Activated CD8-positive, alpha-beta T cell treated with anti-CD3 and anti-CD28 coated beads for 36 hours (primary cell): ENCODE measurements at regions of chr19 and their contacts with region 1.

Region 1: GRCh38 chr19:58519355-58520256 is at the start of gene ZBTB45:
- DNase-seq: peak; percentile 93
- ATAC-seq: peak; percentile 82
- H3K4me3 Mint-ChIP-seq: peak within 1 kb of the TSS; percentile 88
- H3K27ac Mint-ChIP-seq: peak within 1 kb of the TSS; percentile 96
- H3K4me1 Mint-ChIP-seq: peaks cover 37% of the 10 kb centered on the region
- H3K27me3 Mint-ChIP-seq: no peaks in the 10 kb centered on the region
- CTCF ChIP-seq: peak; percentile 78
- total RNA-seq, gene ZBTB45: 7.4 to 7.9 TPM

Region 2: GRCh38 chr19:58261968-58262921 is 257.4 kb before region 1 on chr19:
- CTCF ChIA-PET with region 1: no interaction called
- POLR2A ChIA-PET with region 1: no interaction called
- intact Hi-C with region 1: no loop called
- DNase-seq: no peak
- ATAC-seq: peak; percentile 12
- H3K4me3 Mint-ChIP-seq: no peak overlapping the region
- H3K27ac Mint-ChIP-seq: no peak overlapping the region
- H3K4me1 Mint-ChIP-seq: no peaks in the 10 kb centered on the region
- H3K27me3 Mint-ChIP-seq: no peaks in the 10 kb centered on the region
- CTCF ChIP-seq: no peak

Region 3: DNA sequence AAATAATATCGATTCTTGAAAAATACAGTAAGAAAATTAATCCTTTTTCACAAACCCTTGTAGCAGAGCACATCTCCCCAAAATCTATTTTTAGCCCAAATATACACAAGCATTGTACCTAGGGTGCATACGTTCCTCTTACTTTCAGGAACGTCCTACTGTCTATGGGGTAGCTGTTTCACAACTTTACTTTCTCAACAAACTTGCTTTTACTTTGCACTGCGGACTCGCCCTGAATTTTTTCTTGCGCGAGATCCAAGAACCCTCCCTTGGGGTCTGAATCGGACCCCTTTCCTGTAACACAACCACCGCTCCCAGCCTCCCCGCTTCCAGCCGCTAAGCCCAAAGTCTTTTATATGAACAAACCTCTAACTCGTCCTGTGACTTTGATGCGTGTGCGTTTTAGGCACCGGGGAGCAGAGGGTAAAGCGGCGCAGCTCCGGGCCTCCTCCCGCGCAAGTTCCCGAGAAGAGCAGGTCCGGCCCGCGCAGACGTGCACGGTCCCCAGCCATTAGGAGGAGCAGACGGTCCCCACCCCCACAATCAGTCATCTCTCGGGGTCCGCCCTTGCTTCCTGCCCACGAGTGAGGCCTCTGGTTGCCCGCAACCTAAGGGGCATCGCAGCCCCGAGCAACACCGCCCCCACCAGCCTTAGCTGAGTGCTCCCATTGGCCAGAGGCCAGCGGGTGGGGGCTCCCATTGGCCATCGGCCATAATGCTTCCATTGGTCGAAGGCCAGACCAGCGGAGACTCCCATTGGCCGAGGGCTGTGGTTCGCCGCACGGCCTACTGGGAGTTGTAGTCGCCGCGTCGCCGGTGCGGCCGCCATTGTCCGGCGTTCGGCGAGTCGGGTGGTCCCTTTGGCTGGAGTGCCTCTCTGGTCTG is 241.2 kb before region 1 on chr19 and contains the start of gene ZNF8:
- CTCF ChIA-PET with region 1: no interaction called
- POLR2A ChIA-PET with region 1: no interaction called
- intact Hi-C with region 1: no loop called
- DNase-seq: peak; percentile 99
- ATAC-seq: peak; percentile 98
- H3K4me3 Mint-ChIP-seq: peak within 1 kb of the TSS; percentile 99
- H3K27ac Mint-ChIP-seq: peak within 1 kb of the TSS; percentile 97
- H3K4me1 Mint-ChIP-seq: peaks cover 37% of the 10 kb centered on the region
- H3K27me3 Mint-ChIP-seq: no peaks in the 10 kb centered on the region
- CTCF ChIP-seq: no peak
- total RNA-seq, gene ZNF8: 5.2 to 5.8 TPM

Region 4: DNA sequence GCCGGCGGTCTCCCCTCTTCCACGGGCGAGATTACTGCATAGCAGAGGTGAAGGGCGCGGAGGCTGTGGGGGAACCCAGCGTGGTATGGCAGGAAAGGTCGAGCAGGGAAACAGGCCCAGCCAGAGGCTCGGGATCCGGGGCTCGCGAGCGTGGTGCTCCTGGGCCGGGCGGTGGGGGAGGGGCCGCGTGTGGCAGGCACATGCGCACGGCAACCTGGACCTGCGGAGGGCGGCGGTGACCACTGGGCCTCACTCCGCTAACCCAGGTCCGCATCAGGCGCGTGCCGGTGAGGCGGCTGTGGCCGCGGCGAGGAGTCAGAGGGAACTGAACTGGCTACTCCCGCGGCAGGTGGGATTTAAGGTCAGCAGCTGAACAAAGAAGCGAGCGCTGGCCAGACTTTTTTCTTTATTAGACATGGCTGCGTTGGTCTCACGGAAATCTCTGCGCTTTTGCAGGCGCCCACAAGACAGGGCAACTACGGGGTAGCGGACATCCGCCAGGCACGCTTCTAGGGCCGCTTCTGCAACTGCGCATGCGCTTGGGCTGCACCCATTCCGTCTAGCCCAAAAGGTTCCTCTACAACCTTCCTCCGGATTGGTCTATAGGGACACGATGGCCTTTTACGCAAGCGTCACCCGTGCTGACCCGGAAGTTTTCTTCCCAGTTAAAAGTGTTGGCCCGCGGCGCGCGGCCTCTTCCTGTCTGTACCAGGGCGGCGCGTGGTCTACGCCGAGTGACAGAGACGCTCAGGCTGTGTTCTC is 132.8 kb before region 1 on chr19 and contains the start of gene RPS5:
- CTCF ChIA-PET with region 1: no interaction called
- POLR2A ChIA-PET with region 1: interaction called, 11 read pairs
- intact Hi-C with region 1: no loop called
- DNase-seq: peak; percentile 97
- ATAC-seq: peak; percentile 91
- H3K4me3 Mint-ChIP-seq: peak within 1 kb of the TSS; percentile 97
- H3K27ac Mint-ChIP-seq: peak within 1 kb of the TSS; percentile 98
- H3K4me1 Mint-ChIP-seq: peaks cover 35% of the 10 kb centered on the region
- H3K27me3 Mint-ChIP-seq: no peaks in the 10 kb centered on the region
- CTCF ChIP-seq: no peak
- total RNA-seq, gene RPS5: 1,906 to 1,936 TPM

Region 5: DNA sequence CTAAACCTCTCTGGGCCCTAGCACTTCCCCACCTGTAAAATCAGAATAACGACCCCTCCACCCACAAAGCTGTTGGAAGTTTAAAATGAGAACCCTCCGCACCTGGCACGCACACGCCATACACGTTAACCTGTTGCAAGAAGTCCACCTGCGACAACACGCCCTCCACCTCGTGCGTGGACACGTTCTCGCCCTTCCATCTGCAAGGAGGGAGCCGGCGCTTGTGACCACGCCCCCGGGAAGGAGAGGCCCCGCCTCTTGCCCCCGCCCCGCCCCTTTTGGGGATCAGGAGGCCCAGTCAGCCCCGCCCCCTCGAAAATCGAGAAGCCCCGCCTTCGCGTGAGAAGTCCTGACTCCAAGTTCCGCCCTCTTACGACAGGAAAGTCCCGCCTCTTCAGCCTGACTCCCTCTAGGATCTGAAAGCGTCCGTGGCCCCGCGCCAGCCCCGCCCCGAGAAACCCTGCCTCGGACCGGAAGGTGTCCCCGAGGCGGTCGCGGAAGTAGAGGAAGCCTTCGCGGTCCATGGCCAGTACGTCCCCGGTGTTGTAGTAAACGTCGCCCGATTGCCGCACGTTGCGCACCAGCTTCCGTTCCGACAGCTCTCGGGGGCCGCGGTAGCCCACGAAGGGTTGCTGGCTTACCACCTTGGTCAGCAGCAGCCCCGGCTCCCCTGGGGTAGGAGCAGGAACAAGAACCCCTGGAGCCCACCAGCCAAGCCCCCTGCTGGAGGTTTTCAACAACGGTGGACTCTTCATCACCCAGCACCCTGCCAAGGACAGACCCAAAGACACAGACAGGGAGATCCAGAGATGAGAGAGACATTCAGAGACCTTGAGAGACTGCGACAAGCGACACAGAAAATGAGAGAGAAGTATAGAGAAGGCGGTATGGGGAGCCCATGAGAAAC is 20.3 kb before region 1 on chr19:
- CTCF ChIA-PET with region 1: interaction called, 11 read pairs
- POLR2A ChIA-PET with region 1: interaction called, 27 read pairs
- intact Hi-C with region 1: no loop called
- DNase-seq: peak; percentile 100
- ATAC-seq: peak; percentile 97
- H3K4me3 Mint-ChIP-seq: peak overlapping the region; percentile 87
- H3K27ac Mint-ChIP-seq: peak overlapping the region; percentile 86
- H3K4me1 Mint-ChIP-seq: peaks cover 23% of the 10 kb centered on the region
- H3K27me3 Mint-ChIP-seq: no peaks in the 10 kb centered on the region
- CTCF ChIP-seq: no peak

Region 6: DNA sequence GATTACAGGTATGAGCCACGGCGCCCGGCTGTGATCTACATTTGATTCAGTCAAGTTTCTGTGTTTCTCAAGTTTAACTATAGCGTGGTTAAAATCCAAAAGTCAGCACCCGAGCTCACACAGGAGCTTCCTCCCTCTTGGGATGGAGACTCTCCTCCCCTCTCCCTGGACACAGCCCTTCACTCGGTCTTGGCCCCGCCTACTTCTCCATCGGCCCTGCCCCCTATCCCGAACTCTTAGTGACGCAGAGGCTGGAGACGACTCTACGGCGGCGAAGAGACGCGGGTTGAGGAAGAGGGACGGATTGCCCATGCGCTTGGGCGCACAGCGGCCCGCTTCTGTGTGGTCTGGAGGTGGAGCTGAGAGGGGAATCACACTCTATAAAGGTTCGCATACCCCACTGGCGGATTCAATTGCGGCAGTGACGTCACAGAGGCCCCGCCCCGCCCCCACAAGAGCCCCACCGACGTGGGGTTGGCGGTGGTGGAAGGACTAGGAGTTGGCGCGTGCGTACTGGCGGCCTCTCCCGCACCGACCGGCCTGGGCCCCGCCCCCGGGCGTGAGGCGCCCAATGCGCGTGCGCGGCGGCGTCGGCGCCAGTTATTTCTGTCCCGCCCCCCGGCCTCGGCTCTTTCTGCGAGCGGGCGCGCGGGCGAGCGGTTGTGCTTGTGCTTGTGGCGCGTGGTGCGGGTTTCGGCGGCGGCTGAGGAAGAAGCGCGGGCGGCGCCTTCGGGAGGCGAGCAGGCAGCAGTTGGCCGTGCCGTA is 24.4 kb after region 1 on chr19 and contains the start of gene TRIM28:
- CTCF ChIA-PET with region 1: interaction called, 16 read pairs
- POLR2A ChIA-PET with region 1: interaction called, 164 read pairs
- intact Hi-C with region 1: no loop called
- DNase-seq: peak; percentile 100
- ATAC-seq: peak; percentile 97
- H3K4me3 Mint-ChIP-seq: peak within 1 kb of the TSS; percentile 96
- H3K27ac Mint-ChIP-seq: peak within 1 kb of the TSS; percentile 97
- H3K4me1 Mint-ChIP-seq: peaks cover 32% of the 10 kb centered on the region
- H3K27me3 Mint-ChIP-seq: peaks cover 14% of the 10 kb centered on the region
- CTCF ChIP-seq: no peak
- total RNA-seq, gene TRIM28: 527 to 550 TPM

Region 7: DNA sequence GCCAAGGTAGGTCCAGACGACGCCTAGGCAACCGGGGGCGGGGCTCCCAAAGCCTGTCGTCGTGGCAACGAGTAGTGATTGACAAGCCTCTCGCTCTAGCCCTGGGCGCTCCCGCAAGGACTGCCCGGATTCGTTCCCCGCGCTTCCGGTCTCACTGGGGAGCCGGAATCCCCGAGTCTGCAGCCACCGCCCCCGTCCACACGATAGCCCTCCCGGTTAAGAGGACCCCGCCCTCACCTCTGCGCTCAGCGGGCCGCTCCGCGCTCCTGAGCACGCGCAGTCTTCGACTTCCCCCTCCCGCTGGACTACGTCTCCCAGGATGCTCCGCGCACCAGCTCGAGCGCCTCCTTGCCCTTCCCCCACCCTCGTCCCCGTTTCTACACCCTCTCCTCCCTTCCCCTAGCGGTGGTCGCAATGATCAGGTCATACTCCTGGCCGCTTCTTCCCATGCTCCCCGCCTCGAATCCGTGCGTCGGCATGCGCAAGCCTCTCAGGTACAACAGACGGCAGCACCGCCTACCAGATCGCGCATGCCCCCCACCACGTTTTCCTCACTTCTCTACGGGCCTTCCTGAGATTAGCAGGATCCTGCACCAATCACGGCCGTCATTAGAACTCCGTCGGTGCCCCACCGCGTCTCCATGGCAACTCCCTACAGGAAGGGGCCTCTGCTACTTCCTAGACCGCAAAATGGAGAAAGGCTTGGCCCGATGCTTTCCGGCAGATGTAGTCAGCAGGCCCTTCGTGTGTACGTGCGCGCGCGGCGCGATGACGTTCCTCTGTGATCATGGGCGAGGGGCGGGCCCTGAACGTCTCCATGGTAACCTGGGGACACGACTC is 53.4 kb after region 1 on chr19 and contains the start of gene MZF1:
- CTCF ChIA-PET with region 1: interaction called, 131 read pairs
- POLR2A ChIA-PET with region 1: interaction called, 19 read pairs
- intact Hi-C with region 1: no loop called
- DNase-seq: peak; percentile 100
- ATAC-seq: peak; percentile 68
- H3K4me3 Mint-ChIP-seq: peak within 1 kb of the TSS; percentile 84
- H3K27ac Mint-ChIP-seq: peak within 1 kb of the TSS; percentile 100
- H3K4me1 Mint-ChIP-seq: peaks cover 42% of the 10 kb centered on the region
- H3K27me3 Mint-ChIP-seq: no peaks in the 10 kb centered on the region
- CTCF ChIP-seq: no peak
- total RNA-seq, gene MZF1: 12.1 to 13.4 TPM